CD4-positive, alpha-beta memory T cell (primary cell): ENCODE measurements at regions of chr3 and their contacts with region 1.

Region 1: GRCh38 chr3:55180936-55181535 is 253.2 kb upstream of the LRTM1 start:
- DNase-seq: no peak
- H3K4me3 ChIP-seq: no peak overlapping the region
- H3K4me3 Mint-ChIP-seq: no peak overlapping the region
- H3K27ac ChIP-seq: no peak overlapping the region
- H3K27ac Mint-ChIP-seq: no peak overlapping the region
- H3K4me1 ChIP-seq: no peaks in the 10 kb centered on the region
- H3K4me1 Mint-ChIP-seq: no peaks in the 10 kb centered on the region
- H3K27me3 ChIP-seq: no peaks in the 10 kb centered on the region
- H3K27me3 Mint-ChIP-seq: no peaks in the 10 kb centered on the region

Region 2: GRCh38 chr3:53293867-53294266 is 1887.2 kb before region 1 on chr3:
- CTCF ChIA-PET with region 1: no interaction called
- POLR2A ChIA-PET with region 1: no interaction called
- intact Hi-C with region 1: loop called (anchors 10 kb)
- DNase-seq: no peak
- H3K4me3 ChIP-seq: no peak overlapping the region
- H3K4me3 Mint-ChIP-seq: no peak overlapping the region
- H3K27ac ChIP-seq: no peak overlapping the region
- H3K27ac Mint-ChIP-seq: peak overlapping the region in 4 of 7 donors; percentile 11 to 32 (median 22)
- H3K4me1 ChIP-seq: no peaks in the 10 kb centered on the region
- H3K4me1 Mint-ChIP-seq: peaks cover 0 to 3% (median 0%) of the 10 kb centered on the region in 4 donors
- H3K27me3 ChIP-seq: no peaks in the 10 kb centered on the region
- H3K27me3 Mint-ChIP-seq: no peaks in the 10 kb centered on the region